ENCODE measurements at regions of chr19 and their contacts with region 1.

Region 1: GRCh38 chr19:34145741-34146202 is 26.5 kb upstream of the LSM14A start:
- DNase-seq: peak in 1 of 2 experiments; percentile 53
- H3K4me3 ChIP-seq: no peak overlapping the region
- H3K27ac ChIP-seq: no peak overlapping the region
- H3K4me1 ChIP-seq: no peaks in the 10 kb centered on the region
- H3K27me3 ChIP-seq: no peaks in the 10 kb centered on the region
- CTCF ChIP-seq: peak; percentile 57 to 87 (median 81)
- EP300 ChIP-seq: no peak
- POLR2A ChIP-seq: no peak
- RAD21 ChIP-seq: peak; percentile 91 to 92

Region 2: DNA sequence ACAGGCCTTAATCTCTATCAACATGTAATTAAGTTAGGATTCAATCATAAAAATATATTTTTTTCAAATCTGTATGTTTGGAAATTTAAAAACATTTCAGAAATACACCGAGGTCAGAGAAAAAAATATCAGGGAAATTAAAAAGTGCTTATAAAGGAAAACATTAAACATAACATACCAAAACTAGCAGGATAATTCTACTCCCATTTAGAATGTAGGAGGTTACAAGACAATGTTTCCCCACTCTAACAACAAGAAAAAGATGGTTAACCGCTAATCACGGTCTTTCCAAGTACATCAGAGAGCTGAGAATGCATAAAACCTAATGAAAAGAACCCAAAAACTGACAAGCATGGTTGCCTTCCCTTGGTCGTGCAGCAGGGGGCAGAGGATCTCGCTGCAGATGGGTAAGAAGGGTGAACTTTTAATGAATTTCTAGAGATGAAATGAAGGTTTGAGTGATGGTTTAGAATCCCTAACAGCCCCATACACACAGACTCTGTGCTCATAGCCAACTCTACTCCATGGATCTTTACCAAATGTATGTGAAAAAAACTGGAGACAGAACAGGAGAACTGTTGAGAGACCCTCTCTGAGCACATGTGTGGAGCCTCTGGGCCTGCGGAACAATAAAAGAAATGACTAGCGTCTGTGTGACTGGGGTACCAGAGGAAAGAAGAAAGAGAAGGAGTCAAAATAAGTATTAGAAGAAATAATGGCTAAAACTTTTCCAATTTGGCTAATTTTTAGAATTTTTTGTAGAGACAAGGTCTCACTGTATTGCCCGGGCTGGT is 24.7 kb before region 1 on chr19:
- CTCF ChIA-PET with region 1: interaction called, 41 read pairs
- POLR2A ChIA-PET with region 1: no interaction called
- DNase-seq: peak in 1 of 2 experiments; percentile 67
- H3K4me3 ChIP-seq: no peak overlapping the region
- H3K27ac ChIP-seq: no peak overlapping the region
- H3K4me1 ChIP-seq: no peaks in the 10 kb centered on the region; a peak in 1 of 7 replicates
- H3K27me3 ChIP-seq: no peaks in the 10 kb centered on the region
- CTCF ChIP-seq: peak; percentile 71 to 88 (median 82)
- EP300 ChIP-seq: no peak
- POLR2A ChIP-seq: no peak
- RAD21 ChIP-seq: peak; percentile 60 to 65

Region 3: GRCh38 chr19:34128558-34129250 is 17.1 kb before region 1 on chr19:
- CTCF ChIA-PET with region 1: interaction called, 10 read pairs
- POLR2A ChIA-PET with region 1: no interaction called
- DNase-seq: no peak
- H3K4me3 ChIP-seq: no peak overlapping the region
- H3K27ac ChIP-seq: no peak overlapping the region
- H3K4me1 ChIP-seq: no peaks in the 10 kb centered on the region; a peak in 1 of 7 replicates
- H3K27me3 ChIP-seq: no peaks in the 10 kb centered on the region
- CTCF ChIP-seq: no peak
- EP300 ChIP-seq: no peak
- POLR2A ChIP-seq: no peak
- RAD21 ChIP-seq: no peak

Region 4: GRCh38 chr19:34134190-34135053 is 11.3 kb before region 1 on chr19:
- CTCF ChIA-PET with region 1: interaction called, 10 read pairs
- POLR2A ChIA-PET with region 1: interaction called, 15 read pairs
- DNase-seq: peak; percentile 80 to 96
- H3K4me3 ChIP-seq: peak overlapping the region; percentile 77 to 88 (median 81)
- H3K27ac ChIP-seq: peak overlapping the region; percentile 86
- H3K4me1 ChIP-seq: peaks cover 0 to 4% (median 0%) of the 10 kb centered on the region in 4 experiments; a peak in 2 of 7 replicates
- H3K27me3 ChIP-seq: no peaks in the 10 kb centered on the region
- CTCF ChIP-seq: peak in 1 of 3 experiments; percentile 6; a peak in 1 of 4 replicates
- EP300 ChIP-seq: no peak
- POLR2A ChIP-seq: peak; percentile 94 to 99
- RAD21 ChIP-seq: peak in 1 of 2 experiments; percentile 8; a peak in 1 of 4 replicates

Region 5: DNA sequence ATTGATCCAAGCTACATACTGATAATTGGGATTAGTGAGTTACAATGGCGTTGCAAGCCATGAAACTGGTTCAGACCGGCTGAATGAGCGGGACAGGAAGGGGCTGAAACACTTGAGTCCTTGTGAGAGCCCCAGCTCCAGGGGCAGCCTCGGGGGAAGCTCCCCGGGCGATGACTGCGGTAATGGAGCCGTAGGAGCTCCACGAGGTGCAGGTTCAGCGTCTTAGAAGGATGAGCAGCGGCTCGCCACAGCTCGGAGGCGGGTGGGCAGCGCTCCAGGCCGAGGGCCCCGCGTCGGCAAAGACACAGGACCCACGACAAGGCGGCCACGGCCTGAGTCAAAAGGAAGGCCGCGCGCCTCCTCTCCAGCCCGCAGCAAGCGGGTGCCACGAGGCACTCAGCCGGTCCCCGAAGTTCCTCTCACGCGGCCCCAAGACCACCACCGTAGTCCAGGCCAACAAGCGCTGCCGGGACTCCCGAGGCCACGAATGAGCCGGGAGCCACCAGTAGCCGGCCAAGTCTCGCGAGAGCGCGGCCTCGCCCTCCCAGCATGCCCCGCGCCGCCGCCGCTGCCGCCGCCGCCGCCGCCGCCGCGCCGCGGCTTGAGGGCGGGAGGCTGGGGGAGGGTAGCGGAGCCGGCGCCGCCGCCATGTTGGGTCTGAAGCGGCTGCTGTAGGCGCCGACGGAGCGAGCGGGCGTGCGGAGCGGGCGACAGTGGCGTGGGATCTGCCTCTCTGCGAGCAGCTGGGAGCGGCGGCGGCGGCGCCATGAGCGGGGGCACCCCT is 26.3 kb after region 1 on chr19 and contains the start of gene LSM14A:
- CTCF ChIA-PET with region 1: interaction called, 3 read pairs
- POLR2A ChIA-PET with region 1: interaction called, 11 read pairs
- DNase-seq: peak; percentile 61 to 94
- H3K4me3 ChIP-seq: peak within 1 kb of the TSS; percentile 73 to 94 (median 90)
- H3K27ac ChIP-seq: peak within 1 kb of the TSS; percentile 99
- H3K4me1 ChIP-seq: peaks cover 0 to 6% (median 4%) of the 10 kb centered on the region in 4 experiments; a peak in 5 of 7 replicates
- H3K27me3 ChIP-seq: no peaks in the 10 kb centered on the region
- CTCF ChIP-seq: no peak
- EP300 ChIP-seq: no peak
- POLR2A ChIP-seq: peak; percentile 93 to 99
- RAD21 ChIP-seq: no peak
- total RNA-seq, gene LSM14A: 190 and 195 TPM in 2 replicates